MCF 10A (cell line): ENCODE measurements at regions of chr1 and their contacts with region 1.

Region 1: DNA sequence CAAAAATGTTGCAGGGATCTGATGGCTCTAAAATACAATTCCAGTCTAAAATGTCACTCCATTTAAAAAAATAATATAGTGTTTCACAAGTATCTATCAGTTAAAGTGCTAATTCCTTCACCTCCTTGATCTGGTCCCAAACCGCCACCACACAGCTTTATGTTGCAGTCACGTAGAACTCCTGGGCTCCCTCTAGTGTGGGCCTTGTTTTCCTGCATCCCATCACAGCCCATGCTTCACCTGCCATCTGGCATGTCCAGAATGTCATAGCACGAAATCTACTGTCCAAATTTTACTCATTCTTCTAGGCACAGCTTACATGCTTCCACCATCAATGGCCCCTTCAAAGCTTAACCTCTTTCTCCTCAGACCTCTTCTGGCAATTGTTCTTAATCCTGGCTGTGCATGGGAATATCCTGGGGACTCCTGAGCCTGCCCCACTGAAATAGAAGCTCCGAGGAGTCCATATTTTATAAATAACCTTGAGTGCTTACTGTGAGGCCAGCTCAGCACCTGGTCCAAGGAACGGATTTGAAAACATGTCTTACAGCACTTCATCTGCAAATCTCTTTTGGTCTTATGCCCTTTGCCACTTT is 15.5 kb downstream of the FYB2 start:
- DNase-seq: peak; percentile 68
- H3K4me3 Mint-ChIP-seq: no peak overlapping the region
- H3K27ac Mint-ChIP-seq: no peak overlapping the region
- H3K4me1 Mint-ChIP-seq: no peaks in the 10 kb centered on the region
- H3K27me3 Mint-ChIP-seq: no peaks in the 10 kb centered on the region
- CTCF ChIP-seq: peak; percentile 63

Region 2: GRCh38 chr1:56322211-56322610 is 481.4 kb before region 1 on chr1:
- CTCF ChIA-PET with region 1: no interaction called
- POLR2A ChIA-PET with region 1: no interaction called
- intact Hi-C with region 1: no loop called
- DNase-seq: no peak
- H3K4me3 Mint-ChIP-seq: no peak overlapping the region
- H3K27ac Mint-ChIP-seq: no peak overlapping the region
- H3K4me1 Mint-ChIP-seq: no peaks in the 10 kb centered on the region
- H3K27me3 Mint-ChIP-seq: no peaks in the 10 kb centered on the region
- CTCF ChIP-seq: no peak

Region 3: GRCh38 chr1:56758135-56758534 is 45.5 kb before region 1 on chr1:
- CTCF ChIA-PET with region 1: interaction called, 9 read pairs
- POLR2A ChIA-PET with region 1: no interaction called
- intact Hi-C with region 1: loop called (anchors 5 kb)
- DNase-seq: peak; percentile 61
- H3K4me3 Mint-ChIP-seq: no peak overlapping the region
- H3K27ac Mint-ChIP-seq: no peak overlapping the region
- H3K4me1 Mint-ChIP-seq: no peaks in the 10 kb centered on the region
- H3K27me3 Mint-ChIP-seq: peaks cover 15% of the 10 kb centered on the region
- CTCF ChIP-seq: no peak

Region 4: DNA sequence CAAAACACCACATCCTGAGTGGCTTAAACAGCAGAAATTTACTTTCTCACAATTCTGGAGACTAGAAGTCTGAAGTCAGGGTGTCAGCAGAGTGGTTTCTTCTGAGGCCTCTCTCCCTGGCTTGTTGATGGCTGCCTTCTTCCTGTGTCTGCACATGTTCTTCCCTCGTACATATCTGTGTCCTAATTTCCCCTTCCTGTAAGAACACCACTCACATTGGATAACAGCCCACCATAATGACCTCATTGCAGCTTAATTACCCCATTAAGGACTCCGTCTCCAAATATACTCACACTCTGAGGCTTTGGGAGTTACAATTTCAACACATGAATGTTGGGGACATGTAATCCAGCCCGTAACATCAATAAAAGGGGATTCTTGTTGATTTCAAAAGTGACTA is 74.3 kb after region 1 on chr1:
- CTCF ChIA-PET with region 1: no interaction called
- POLR2A ChIA-PET with region 1: no interaction called
- intact Hi-C with region 1: no loop called
- DNase-seq: no peak
- H3K4me3 Mint-ChIP-seq: no peak overlapping the region
- H3K27ac Mint-ChIP-seq: no peak overlapping the region
- H3K4me1 Mint-ChIP-seq: no peaks in the 10 kb centered on the region
- H3K27me3 Mint-ChIP-seq: no peaks in the 10 kb centered on the region
- CTCF ChIP-seq: no peak

Region 5: DNA sequence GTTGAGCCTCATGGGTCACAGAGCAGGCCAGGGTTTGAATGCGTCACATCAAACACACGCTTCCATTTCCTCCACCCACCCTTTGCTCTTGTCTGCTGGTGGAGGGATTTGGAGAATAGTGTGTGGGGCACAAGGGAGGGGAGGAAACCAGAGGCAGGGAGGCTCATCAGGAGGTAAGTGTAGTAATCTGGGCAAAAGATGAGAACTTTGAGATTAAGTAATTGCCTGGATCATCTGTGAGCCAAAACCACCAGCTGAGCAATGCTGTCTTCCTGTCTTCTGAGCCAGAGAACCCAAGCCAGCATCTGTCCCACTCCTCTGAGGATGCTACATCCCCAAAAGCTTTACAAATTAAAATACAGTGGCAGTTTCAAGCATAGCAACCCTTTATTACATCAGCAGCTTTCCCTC is 116.9 kb after region 1 on chr1:
- CTCF ChIA-PET with region 1: no interaction called
- POLR2A ChIA-PET with region 1: no interaction called
- intact Hi-C with region 1: no loop called
- DNase-seq: no peak
- H3K4me3 Mint-ChIP-seq: no peak overlapping the region
- H3K27ac Mint-ChIP-seq: no peak overlapping the region
- H3K4me1 Mint-ChIP-seq: no peaks in the 10 kb centered on the region
- H3K27me3 Mint-ChIP-seq: no peaks in the 10 kb centered on the region
- CTCF ChIP-seq: no peak